ENCODE measurements at regions of chr3 and their contacts with region 1.

Region 1: DNA sequence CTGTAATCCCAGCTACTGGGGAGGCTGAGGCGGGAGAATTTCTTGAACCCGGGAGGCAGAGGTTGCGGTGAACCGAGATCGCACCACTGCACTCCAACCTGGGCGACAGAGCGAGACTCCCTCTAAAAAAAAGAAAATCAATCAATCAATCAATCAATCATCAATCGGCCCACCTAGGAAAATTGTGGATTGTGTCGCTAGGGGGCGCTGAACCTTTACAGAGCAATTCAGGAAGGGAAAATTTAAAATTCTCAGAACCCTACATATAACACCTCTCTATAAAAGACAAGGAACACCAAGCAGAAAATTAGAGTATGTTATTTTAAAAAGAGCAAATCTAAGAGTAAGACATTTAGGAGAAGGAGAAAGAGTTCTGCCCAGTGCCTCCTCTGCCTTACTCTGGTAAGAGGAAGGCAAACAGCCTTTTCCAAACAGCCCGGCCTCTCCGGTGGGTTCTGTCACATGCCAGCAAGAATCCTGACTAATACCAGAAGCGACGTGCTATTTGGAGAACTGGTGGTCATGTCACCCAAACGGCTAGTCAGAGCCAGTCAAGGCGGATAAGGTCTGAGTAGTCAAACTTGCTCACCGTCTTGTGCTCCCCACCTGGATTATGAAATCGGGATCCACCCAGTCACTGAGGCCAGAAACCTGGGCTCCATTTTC is 22.3 kb upstream of the SMCO1 start:
- DNase-seq: no peak
- ATAC-seq: no peak
- H3K4me3 ChIP-seq: no peak overlapping the region
- H3K27ac ChIP-seq: no peak overlapping the region
- H3K4me1 ChIP-seq: no peaks in the 10 kb centered on the region
- H3K27me3 ChIP-seq: no peaks in the 10 kb centered on the region
- CTCF ChIP-seq: peak; percentile 90

Region 2: GRCh38 chr3:196186651-196187573 is 350.5 kb before region 1 on chr3:
- CTCF ChIA-PET with region 1: interaction called, 10 read pairs
- POLR2A ChIA-PET with region 1: no interaction called
- in situ Hi-C with region 1: no loop called
- intact Hi-C with region 1: no loop called
- DNase-seq: no peak
- ATAC-seq: no peak
- H3K4me3 ChIP-seq: no peak overlapping the region
- H3K27ac ChIP-seq: no peak overlapping the region
- H3K4me1 ChIP-seq: no peaks in the 10 kb centered on the region
- H3K27me3 ChIP-seq: no peaks in the 10 kb centered on the region
- CTCF ChIP-seq: no peak

Region 3: DNA sequence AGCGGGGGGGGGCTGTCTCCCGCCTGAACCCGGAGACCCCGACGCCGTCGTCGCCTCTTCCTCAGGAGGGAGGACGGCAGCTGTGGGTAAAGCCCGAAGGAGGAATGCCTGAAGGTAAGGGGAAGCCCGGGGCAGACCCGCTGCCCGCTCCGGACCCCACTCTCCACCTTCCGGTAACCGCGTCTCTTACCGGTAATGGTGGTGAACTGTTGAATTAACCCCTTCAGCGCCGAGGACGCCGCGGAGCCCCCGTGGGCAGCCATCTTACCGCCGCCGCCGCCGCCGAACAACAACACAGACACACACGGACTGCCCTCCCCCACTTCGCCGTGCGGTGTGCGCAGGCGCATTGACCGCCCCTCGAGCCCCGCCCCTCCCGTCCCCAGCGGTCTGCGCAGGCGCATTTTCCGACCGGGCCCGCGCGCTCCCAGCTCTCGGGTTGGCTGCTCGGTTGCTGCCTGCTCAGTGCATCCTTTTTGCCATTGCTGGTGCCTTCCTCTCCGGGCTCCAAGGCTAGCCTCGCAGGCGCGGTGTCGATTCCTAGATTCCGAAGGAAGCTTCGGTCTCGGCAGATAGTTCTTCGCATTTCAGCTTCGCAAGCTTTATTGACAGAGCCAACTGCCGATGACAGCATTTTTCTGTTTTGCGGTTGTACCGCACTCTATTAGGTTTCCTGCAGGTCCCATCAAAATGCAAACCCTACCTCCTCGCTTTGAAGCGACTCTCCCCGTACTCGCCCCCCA is 105.1 kb before region 1 on chr3 and contains the start of gene UBXN7:
- CTCF ChIA-PET with region 1: no interaction called
- POLR2A ChIA-PET with region 1: no interaction called
- in situ Hi-C with region 1: no loop called
- intact Hi-C with region 1: no loop called
- DNase-seq: peak; percentile 75
- ATAC-seq: peak; percentile 96
- H3K4me3 ChIP-seq: peak within 1 kb of the TSS; percentile 76 to 87
- H3K27ac ChIP-seq: peak within 1 kb of the TSS; percentile 91
- H3K4me1 ChIP-seq: peaks cover 7% of the 10 kb centered on the region; the same call in 1 of the 2 replicates
- H3K27me3 ChIP-seq: no peaks in the 10 kb centered on the region
- CTCF ChIP-seq: no peak
- total RNA-seq, gene UBXN7: 61.7 TPM

Region 4: GRCh38 chr3:196684548-196685407 is 147.3 kb after region 1 on chr3:
- CTCF ChIA-PET with region 1: no interaction called
- POLR2A ChIA-PET with region 1: no interaction called
- in situ Hi-C with region 1: no loop called
- intact Hi-C with region 1: loop called (anchors 5 kb)
- DNase-seq: peak; percentile 52
- ATAC-seq: peak; percentile 90
- H3K4me3 ChIP-seq: peak overlapping the region in 1 of 2 experiments; percentile 11; a peak in 1 of 4 replicates
- H3K27ac ChIP-seq: peak overlapping the region; percentile 49
- H3K4me1 ChIP-seq: peaks cover 7% of the 10 kb centered on the region
- H3K27me3 ChIP-seq: no peaks in the 10 kb centered on the region
- CTCF ChIP-seq: peak; percentile 93

Region 5: DNA sequence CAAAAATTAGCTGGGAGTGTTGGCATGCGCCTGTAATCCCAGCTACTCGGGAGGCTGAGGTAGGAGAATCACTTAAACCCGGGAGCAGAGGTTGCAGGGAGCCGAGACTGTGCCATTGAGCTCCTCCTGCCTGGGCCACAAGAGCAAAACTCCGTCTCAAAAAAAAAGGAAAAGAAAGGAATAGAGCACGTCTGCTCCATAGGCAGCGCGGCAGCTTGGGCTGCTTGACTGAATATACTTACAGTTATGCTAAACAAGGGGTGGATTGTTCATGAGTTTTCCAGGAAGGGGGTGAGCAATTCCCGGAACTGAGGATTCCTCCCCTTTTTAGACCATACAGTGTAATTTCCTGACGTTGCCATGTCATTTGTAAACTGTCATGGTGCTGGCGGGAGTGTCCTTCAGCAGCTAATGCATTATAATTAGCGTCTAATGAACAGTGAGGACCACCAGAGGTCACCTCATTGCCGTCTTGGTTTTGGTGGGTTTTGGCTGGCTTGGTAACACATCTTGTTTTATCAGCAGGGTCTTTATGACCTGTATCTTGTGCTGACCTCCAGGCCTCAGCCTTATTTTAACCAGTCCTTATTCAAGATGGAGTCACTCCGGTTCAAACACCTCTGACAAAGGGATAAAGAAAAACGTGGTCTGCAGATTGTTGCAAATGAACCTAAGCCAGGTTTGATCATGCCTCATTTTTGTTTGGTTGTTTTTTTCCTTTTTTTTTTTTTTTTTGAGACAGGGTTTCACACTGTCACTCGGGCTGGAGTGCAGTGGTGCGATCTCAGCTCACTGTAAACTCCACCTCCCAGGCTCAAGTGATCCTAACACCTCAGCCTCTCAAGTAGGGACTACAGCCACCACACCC is 305.3 kb after region 1 on chr3:
- CTCF ChIA-PET with region 1: no interaction called
- POLR2A ChIA-PET with region 1: interaction called, 10 read pairs
- in situ Hi-C with region 1: no loop called
- intact Hi-C with region 1: no loop called
- DNase-seq: no peak
- ATAC-seq: no peak
- H3K4me3 ChIP-seq: no peak overlapping the region
- H3K27ac ChIP-seq: no peak overlapping the region
- H3K4me1 ChIP-seq: 0 out of 2 replicates have a peak, but pooled peaks cover 4% of the 10 kb centered on the region
- H3K27me3 ChIP-seq: no peaks in the 10 kb centered on the region
- CTCF ChIP-seq: no peak